Activated CD4-positive, alpha-beta T cell treated with anti-CD3 and anti-CD28 coated beads for 36 hours (primary cell): ENCODE measurements at regions of chr5 and their contacts with region 1.

Region 1: DNA sequence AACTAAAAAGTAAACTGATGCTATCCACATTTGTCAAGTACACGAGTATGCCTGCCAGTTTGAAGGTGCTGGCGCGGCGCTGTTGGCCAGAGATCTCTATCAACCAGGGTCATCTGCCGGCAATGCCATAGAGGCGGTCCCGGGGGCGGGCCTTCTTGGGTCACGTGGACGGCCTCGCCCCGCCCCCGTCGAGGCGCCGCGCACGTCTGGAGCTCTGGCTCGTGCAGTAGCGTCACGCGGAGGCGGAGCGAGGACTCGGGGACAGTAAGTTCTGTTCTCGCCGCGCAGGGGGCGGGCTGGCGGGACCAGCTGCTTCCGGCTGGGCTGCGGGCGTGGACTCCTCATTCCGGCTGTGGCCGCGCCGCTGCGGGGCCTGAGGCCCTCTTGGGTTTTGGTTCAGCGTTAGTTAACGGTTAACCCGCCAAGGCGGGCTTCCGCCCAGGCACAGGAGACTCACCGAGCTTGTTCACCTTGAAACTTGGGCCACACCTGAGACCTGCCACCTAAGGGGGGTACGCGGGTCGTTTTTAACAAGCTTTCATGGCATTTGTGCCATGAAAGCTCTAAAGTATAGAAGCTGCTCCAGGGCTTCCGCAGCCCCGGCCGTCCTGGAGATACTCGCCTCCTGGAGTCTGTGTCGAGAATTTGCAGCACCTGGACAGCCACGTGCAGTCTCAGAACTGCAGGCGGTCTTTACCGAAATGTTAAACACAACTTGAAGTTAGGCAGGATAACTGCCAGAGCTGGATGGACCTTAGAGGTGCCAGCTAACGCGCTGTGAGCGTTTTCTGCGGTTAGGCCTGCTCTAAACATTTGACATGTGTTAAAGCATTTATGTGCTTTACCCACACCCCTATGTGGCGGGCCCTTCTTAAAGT is at the start of gene RFESD:
- DNase-seq: peak; percentile 98
- ATAC-seq: peak; percentile 92
- H3K4me3 Mint-ChIP-seq: peak within 1 kb of the TSS; percentile 79
- H3K27ac Mint-ChIP-seq: peak within 1 kb of the TSS; percentile 87
- H3K4me1 Mint-ChIP-seq: peaks cover 42% of the 10 kb centered on the region
- H3K27me3 Mint-ChIP-seq: no peaks in the 10 kb centered on the region
- total RNA-seq, gene RFESD: 4.1 to 9.2 TPM

Region 2: GRCh38 chr5:93735378-93735777 is 1911.4 kb before region 1 on chr5:
- CTCF ChIA-PET with region 1: no interaction called
- POLR2A ChIA-PET with region 1: no interaction called
- intact Hi-C with region 1: no loop called
- DNase-seq: no peak
- ATAC-seq: no peak
- H3K4me3 Mint-ChIP-seq: no peak overlapping the region
- H3K27ac Mint-ChIP-seq: no peak overlapping the region
- H3K4me1 Mint-ChIP-seq: no peaks in the 10 kb centered on the region
- H3K27me3 Mint-ChIP-seq: no peaks in the 10 kb centered on the region

Region 3: GRCh38 chr5:95554647-95555548 is 91.9 kb before region 1 on chr5 and contains the starts of genes ARSK and SKIC3:
- CTCF ChIA-PET with region 1: interaction called, 3 read pairs
- POLR2A ChIA-PET with region 1: interaction called, 4 read pairs
- intact Hi-C with region 1: loop called (anchors 1 kb)
- DNase-seq: peak; percentile 92
- ATAC-seq: peak; percentile 91
- H3K4me3 Mint-ChIP-seq: peak within 1 kb of the TSS; percentile 88
- H3K27ac Mint-ChIP-seq: peak within 1 kb of the TSS; percentile 90
- H3K4me1 Mint-ChIP-seq: peaks cover 37% of the 10 kb centered on the region
- H3K27me3 Mint-ChIP-seq: no peaks in the 10 kb centered on the region
- total RNA-seq, gene ARSK: 4.6 to 5.3 TPM
- total RNA-seq, gene SKIC3: 74.6 to 75.8 TPM

Region 4: DNA sequence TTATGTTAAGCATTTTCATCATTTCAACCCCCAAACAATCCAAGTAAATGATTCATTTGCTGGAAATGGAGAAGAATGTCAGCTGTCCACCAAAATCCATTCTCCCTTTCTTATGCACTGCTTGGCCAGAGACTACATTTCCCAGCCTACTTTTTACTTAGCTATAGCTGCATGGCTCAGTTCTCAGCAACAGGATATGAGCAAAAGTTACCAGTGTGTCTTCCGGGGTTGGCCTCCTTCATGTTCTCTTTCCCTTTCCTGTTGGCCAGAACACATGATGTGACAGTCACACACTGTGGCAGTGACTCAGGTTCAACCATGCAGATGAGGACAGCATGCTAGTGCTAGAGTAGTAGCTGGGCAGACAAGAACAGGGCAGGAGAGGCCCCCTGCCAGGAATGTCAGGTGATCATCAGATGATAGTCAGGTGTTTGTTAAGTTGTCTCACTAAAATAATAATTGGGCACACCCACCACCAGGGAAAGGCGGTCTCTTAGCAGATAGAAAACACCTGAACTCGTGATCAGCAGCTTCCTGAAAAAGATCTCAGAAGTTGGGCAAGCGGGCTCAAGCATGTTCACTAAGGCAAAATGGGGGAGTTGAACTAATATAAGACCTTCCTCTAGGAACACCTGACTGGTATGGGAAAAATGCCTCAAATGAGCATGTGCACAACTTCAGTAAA is 14.7 kb before region 1 on chr5:
- CTCF ChIA-PET with region 1: interaction called, 39 read pairs
- POLR2A ChIA-PET with region 1: interaction called, 5 read pairs
- intact Hi-C with region 1: loop called (anchors 1 kb)
- DNase-seq: peak; percentile 85
- ATAC-seq: peak; percentile 99
- H3K4me3 Mint-ChIP-seq: peak overlapping the region; percentile 22
- H3K27ac Mint-ChIP-seq: peak overlapping the region; percentile 94
- H3K4me1 Mint-ChIP-seq: peaks cover 22% of the 10 kb centered on the region
- H3K27me3 Mint-ChIP-seq: peaks cover 1% of the 10 kb centered on the region

Region 5: GRCh38 chr5:95730730-95731570 is 84.2 kb after region 1 on chr5 and contains the start of gene RHOBTB3:
- CTCF ChIA-PET with region 1: interaction called, 3 read pairs
- POLR2A ChIA-PET with region 1: interaction called, 3 read pairs
- intact Hi-C with region 1: loop called in 1 of 2 experiments (anchors 1 kb)
- DNase-seq: peak; percentile 62
- ATAC-seq: peak; percentile 52
- H3K4me3 Mint-ChIP-seq: peak within 1 kb of the TSS; percentile 75
- H3K27ac Mint-ChIP-seq: peak within 1 kb of the TSS; percentile 72
- H3K4me1 Mint-ChIP-seq: peaks cover 64% of the 10 kb centered on the region
- H3K27me3 Mint-ChIP-seq: peaks cover 33% of the 10 kb centered on the region
- total RNA-seq, gene RHOBTB3: 3.3 to 3.5 TPM

Region 6: DNA sequence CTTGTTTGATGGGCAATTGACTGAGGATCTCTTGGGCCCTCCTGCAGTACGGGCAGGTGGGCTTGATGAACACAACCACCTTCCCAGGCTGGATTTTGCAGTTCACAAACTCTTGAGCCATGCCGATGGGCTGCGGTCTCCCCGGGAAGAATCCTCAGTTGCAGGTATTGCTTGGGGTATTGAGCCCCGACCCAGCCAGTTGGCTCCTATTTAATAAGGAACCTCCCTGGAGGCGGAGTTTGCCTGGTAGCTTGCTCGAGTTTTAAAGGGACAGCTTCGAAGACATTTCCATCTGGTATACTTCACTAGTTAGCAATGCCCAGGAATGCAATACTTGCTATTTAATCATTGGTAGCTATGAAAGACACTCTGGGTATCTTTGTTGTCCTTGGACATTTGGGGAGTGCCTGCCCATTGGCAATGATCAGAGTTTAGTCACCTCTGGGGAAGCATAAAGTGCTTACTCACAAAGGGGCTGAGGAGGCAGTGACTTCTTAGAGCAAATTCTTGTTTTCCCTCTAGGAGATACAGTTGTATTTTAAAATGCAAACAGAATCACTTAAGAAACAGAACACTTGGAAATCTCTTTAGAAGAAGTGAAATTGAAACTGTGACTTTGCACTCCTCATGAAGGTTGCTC is 175.9 kb after region 1 on chr5 and contains the start of gene GLRX:
- CTCF ChIA-PET with region 1: interaction called, 5 read pairs
- POLR2A ChIA-PET with region 1: interaction called, 3 read pairs
- intact Hi-C with region 1: loop called (anchors 5 kb)
- DNase-seq: peak; percentile 68
- ATAC-seq: peak; percentile 18
- H3K4me3 Mint-ChIP-seq: peak within 1 kb of the TSS; percentile 92
- H3K27ac Mint-ChIP-seq: peak within 1 kb of the TSS; percentile 92
- H3K4me1 Mint-ChIP-seq: peaks cover 62% of the 10 kb centered on the region
- H3K27me3 Mint-ChIP-seq: no peaks in the 10 kb centered on the region
- total RNA-seq, gene GLRX: 21.0 to 31.5 TPM

Region 7: GRCh38 chr5:95961617-95962474 is 315.1 kb after region 1 on chr5 and contains the start of gene ELL2:
- CTCF ChIA-PET with region 1: no interaction called
- POLR2A ChIA-PET with region 1: no interaction called
- intact Hi-C with region 1: loop called in 1 of 2 experiments (anchors 1 kb)
- DNase-seq: peak; percentile 99
- ATAC-seq: peak; percentile 89
- H3K4me3 Mint-ChIP-seq: peak within 1 kb of the TSS; percentile 97
- H3K27ac Mint-ChIP-seq: peak within 1 kb of the TSS; percentile 96
- H3K4me1 Mint-ChIP-seq: peaks cover 51% of the 10 kb centered on the region
- H3K27me3 Mint-ChIP-seq: peaks cover 3% of the 10 kb centered on the region
- total RNA-seq, gene ELL2: 87.6 to 131 TPM

Region 8: DNA sequence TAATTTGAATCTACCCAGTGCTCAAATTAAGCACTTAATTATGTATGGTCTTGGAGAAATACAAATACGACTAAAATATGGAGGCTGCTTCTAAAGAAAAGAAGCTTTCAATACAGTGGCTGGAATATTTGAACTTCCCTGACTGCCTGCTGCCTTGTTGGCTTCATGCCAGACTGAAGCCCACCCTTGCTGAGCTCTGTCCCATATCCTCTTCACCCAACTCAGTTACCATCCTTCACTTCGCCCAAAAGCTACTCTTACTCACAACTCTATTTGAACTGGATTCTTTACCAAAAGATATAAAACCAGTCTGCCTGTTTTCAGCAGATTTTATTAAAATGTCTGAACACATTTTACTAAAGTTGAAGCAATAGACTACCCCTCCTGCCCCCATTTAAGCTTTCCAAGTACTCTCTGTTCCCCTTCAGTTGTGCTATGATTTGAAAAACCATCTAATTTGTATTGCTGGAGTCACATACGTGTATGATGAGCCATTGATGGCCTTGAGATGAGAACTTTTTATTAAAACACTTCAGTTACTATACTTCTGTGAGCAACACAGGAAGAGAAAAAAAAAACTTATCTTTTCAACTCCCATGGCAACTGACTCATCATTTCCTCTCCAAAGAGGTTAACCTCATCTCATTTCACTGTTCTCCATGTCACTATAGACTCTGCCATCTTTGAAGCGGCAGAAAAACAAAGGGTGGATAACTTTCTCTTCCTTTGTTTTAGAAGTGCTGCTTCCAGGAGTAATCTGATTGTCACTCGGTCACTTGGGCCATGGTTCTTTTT is 890.4 kb after region 1 on chr5:
- CTCF ChIA-PET with region 1: no interaction called
- POLR2A ChIA-PET with region 1: no interaction called
- intact Hi-C with region 1: loop called (anchors 5 kb)
- DNase-seq: no peak
- ATAC-seq: peak; percentile 86
- H3K4me3 Mint-ChIP-seq: peak overlapping the region; percentile 1
- H3K27ac Mint-ChIP-seq: peak overlapping the region; percentile 82
- H3K4me1 Mint-ChIP-seq: peaks cover 32% of the 10 kb centered on the region
- H3K27me3 Mint-ChIP-seq: no peaks in the 10 kb centered on the region